Activated T-helper 1 cell treated with anti-CD3 and anti-CD28 coated beads, Interleukin-12 subunit alpha, Interleukin-12 subunit beta, Interleukin-2, Interleukin-4 antibody, amounts not matched to agents 30 ng/mL and 10 ng/mL and 1 ng/mL, durations not matched to agents 14 hours and 24 hours and 36 hours (primary cell): ENCODE measurements at regions of chr4 and their contacts with region 1.

Region 1: GRCh38 chr4:242121-242848 is 63.0 kb downstream of the ZNF732 start:
- DNase-seq: peak; percentile 53
- H3K4me3 Mint-ChIP-seq: peak overlapping the region; percentile 70
- H3K27ac Mint-ChIP-seq: peak overlapping the region; percentile 15
- H3K4me1 Mint-ChIP-seq: peaks cover 13% of the 10 kb centered on the region
- H3K27me3 Mint-ChIP-seq: no peaks in the 10 kb centered on the region

Region 2: GRCh38 chr4:124275-125081 is 117.8 kb before region 1 on chr4 and contains the start of gene ZNF718:
- intact Hi-C with region 1: loop called (anchors 5 kb)
- DNase-seq: peak; percentile 91
- H3K4me3 Mint-ChIP-seq: peak within 1 kb of the TSS; percentile 96
- H3K27ac Mint-ChIP-seq: peak within 1 kb of the TSS; percentile 99
- H3K4me1 Mint-ChIP-seq: peaks cover 33% of the 10 kb centered on the region
- H3K27me3 Mint-ChIP-seq: no peaks in the 10 kb centered on the region
- total RNA-seq, gene ZNF718: 7.3 and 7.7 TPM in 2 replicates

Region 3: GRCh38 chr4:173671-174332 is 68.5 kb before region 1 on chr4:
- intact Hi-C with region 1: no loop called
- DNase-seq: no peak
- H3K4me3 Mint-ChIP-seq: no peak overlapping the region
- H3K27ac Mint-ChIP-seq: no peak overlapping the region
- H3K4me1 Mint-ChIP-seq: no peaks in the 10 kb centered on the region
- H3K27me3 Mint-ChIP-seq: no peaks in the 10 kb centered on the region

Region 4: GRCh38 chr4:205097-205756 is 37.1 kb before region 1 on chr4:
- intact Hi-C with region 1: no loop called
- DNase-seq: no peak
- H3K4me3 Mint-ChIP-seq: no peak overlapping the region
- H3K27ac Mint-ChIP-seq: no peak overlapping the region
- H3K4me1 Mint-ChIP-seq: no peaks in the 10 kb centered on the region
- H3K27me3 Mint-ChIP-seq: no peaks in the 10 kb centered on the region

Region 5: DNA sequence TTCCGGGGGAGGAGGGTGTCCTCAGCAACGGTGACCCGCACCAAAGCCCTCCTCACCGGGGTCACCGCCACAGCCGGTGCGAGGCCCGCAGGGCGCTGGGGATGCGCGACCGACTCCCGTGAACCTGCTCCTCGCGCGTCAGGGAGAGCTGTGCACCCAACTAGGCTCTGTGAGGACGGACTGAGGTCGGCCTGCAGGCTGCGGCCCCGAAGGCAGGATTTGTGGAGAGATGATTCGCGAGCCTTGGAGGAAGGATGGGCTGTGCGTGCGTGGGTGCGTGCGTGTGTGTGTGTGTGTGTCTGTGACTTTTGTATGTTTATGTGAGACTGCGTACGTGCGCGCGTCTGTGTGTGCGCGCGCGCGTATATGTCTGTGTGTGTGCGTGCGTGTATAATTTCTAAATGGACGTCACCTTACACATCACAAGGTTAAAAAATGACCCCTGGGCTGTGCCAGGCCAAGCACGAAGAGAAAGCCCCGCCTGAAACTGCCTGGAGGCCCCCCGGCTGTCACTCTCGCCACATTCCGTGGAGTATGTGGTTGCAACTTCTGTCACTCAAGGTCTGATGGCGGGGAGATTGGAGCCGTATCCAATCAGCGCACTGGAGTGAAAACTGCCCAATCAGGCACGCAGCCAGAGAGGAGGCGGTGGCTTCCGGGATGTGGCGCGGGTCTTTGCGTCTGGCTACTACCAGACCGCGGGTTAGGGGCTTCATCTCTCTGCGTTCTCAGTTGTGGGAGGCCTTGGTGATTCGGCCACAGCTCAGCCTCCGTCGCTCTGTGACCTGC is 95.1 kb after region 1 on chr4 and contains the start of gene ZNF141:
- intact Hi-C with region 1: loop called (anchors 2 kb)
- DNase-seq: peak; percentile 90
- H3K4me3 Mint-ChIP-seq: peak within 1 kb of the TSS; percentile 99
- H3K27ac Mint-ChIP-seq: peak within 1 kb of the TSS; percentile 98
- H3K4me1 Mint-ChIP-seq: peaks cover 25% of the 10 kb centered on the region
- H3K27me3 Mint-ChIP-seq: peaks cover 3% of the 10 kb centered on the region
- total RNA-seq, gene ZNF141: 23.4 and 23.7 TPM in 2 replicates

Region 6: GRCh38 chr4:473570-474457 is 231.5 kb after region 1 on chr4:
- intact Hi-C with region 1: loop called (anchors 10 kb)
- DNase-seq: peak; percentile 94
- H3K4me3 Mint-ChIP-seq: peak overlapping the region; percentile 99
- H3K27ac Mint-ChIP-seq: peak overlapping the region; percentile 95
- H3K4me1 Mint-ChIP-seq: peaks cover 26% of the 10 kb centered on the region
- H3K27me3 Mint-ChIP-seq: no peaks in the 10 kb centered on the region

Region 7: DNA sequence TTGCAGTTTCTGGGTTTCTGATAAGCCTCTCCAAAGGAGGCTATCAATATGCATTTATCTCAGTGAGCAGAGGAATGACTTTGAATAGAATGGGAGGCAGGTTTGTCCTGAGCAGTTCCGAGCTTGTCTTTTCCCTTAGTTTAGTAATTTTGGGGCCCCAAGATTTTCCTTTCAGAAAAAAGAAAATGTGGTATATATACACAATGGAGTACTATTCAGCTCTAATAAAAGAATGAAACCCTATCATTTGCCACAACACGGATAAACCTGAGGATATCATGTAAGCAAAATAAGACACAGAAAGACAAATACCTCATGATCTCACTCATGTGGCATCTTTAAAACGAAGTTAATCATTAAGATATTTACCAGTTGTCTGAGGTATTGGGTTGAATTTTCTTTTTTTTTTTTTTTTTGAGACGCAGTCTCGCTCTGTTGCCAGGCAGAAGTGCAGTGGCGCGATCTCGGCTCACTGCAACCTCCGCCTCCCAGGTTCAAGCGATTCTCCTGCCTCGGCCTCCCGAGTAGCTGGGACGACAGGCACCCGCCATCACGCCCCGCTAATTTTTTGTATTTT is 256.1 kb after region 1 on chr4:
- intact Hi-C with region 1: loop called (anchors 2 kb)
- DNase-seq: no peak
- H3K4me3 Mint-ChIP-seq: peak overlapping the region; percentile 97
- H3K27ac Mint-ChIP-seq: peak overlapping the region; percentile 96
- H3K4me1 Mint-ChIP-seq: peaks cover 32% of the 10 kb centered on the region
- H3K27me3 Mint-ChIP-seq: no peaks in the 10 kb centered on the region

Region 8: DNA sequence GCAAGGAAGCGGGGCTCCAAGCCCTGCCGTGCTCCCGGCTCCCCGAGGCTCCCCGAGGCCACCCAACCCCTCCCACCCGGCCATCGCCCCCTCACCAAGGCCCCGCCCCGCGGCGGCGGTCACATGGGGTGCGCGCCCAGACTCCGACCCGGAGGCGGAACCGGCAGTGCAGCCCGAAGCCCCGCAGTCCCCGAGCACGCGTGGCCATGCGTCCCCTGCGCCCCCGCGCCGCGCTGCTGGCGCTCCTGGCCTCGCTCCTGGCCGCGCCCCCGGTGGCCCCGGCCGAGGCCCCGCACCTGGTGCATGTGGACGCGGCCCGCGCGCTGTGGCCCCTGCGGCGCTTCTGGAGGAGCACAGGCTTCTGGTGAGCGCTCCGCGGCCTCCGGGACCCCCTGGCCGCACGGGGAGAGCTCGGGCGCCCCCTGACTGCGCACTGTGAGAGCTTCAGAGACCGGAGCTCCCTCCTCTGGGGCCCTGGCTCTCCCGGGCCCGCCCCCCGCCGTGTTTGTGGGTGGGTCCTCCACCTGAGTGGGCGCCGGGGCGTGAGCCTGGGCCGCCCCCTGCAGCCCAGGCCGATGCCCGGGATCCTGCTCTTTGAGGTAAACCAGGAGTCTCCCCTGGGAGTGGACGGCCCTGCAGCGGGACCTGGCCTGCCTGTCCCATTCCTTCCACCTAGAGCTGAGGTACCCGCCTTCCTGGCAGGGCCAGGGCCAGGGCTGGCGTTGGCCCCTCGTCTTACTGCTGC is 744.8 kb after region 1 on chr4 and contains the start of gene IDUA:
- intact Hi-C with region 1: loop called (anchors 10 kb)
- DNase-seq: peak; percentile 84
- H3K4me3 Mint-ChIP-seq: peak within 1 kb of the TSS; percentile 88
- H3K27ac Mint-ChIP-seq: peak within 1 kb of the TSS; percentile 81
- H3K4me1 Mint-ChIP-seq: peaks cover 17% of the 10 kb centered on the region
- H3K27me3 Mint-ChIP-seq: no peaks in the 10 kb centered on the region
- total RNA-seq, gene IDUA: 33.8 and 34.3 TPM in 2 replicates